HEK293T (cell line): ENCODE measurements at regions of chr1 and their contacts with region 1.

Region 1: DNA sequence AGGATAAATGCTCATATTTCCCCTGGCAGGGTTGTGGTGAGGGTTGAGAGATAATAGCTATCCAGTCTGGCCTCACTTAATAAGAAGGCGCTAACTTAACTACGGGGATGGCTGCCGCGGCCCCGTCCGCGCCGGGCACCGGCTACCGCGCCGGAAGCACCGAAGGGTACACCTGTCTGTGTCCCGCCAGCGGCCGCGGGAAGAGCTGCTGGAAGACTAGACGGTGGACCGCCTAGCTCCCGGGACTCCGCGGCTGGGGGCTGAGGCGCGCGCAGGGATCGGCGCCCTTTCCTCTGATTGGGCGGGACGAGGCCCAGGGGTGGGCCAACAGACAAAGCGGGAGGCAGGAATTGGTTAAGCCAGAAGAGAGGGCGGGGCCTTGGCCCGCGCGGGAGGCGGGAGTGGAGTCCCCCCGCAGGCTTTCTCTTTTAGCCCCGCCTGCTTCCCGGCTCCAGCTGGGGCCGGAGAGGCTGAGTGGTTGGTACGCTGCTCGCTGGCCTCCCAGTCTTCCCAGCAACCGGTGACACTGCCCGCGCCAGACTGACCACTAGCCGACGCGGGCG is at the start of gene ZNF672:
- DNase-seq: peak; percentile 88

Region 2: DNA sequence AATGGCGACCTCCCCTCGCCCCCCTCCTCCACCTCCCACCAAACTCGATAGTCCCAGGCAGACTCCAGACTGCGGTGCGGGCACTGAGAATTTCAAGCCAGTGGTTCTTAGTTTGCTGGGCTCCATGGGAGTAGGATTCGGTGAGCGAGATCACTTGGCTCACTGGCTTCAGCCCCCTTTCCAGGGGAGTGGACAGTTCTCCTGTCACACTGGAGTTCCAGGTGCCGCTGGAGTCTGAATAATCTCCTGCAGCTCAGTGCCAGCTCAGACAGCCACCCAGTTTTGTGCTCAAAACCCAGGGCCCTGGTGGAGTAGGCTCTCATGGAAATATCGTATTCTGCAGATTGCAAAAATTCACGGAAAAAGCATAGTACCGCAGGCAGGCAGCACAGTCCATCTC is 521.1 kb before region 1 on chr1:
- CTCF ChIA-PET with region 1: no interaction called
- POLR2A ChIA-PET with region 1: no interaction called
- DNase-seq: no peak

Region 3: GRCh38 chr1:248730507-248731335 is 107.2 kb before region 1 on chr1:
- CTCF ChIA-PET with region 1: no interaction called
- POLR2A ChIA-PET with region 1: no interaction called
- DNase-seq: no peak

Region 4: GRCh38 chr1:248779350-248779749 is 58.5 kb before region 1 on chr1:
- CTCF ChIA-PET with region 1: no interaction called
- POLR2A ChIA-PET with region 1: no interaction called
- DNase-seq: no peak

Region 5: GRCh38 chr1:248807067-248807737 is 30.7 kb before region 1 on chr1:
- CTCF ChIA-PET with region 1: no interaction called
- POLR2A ChIA-PET with region 1: no interaction called
- DNase-seq: peak; percentile 51

Region 6: GRCh38 chr1:248825909-248826760 is 11.7 kb before region 1 on chr1 and contains the start of gene SH3BP5L:
- CTCF ChIA-PET with region 1: no interaction called
- POLR2A ChIA-PET with region 1: interaction called, 13 read pairs
- DNase-seq: peak; percentile 87

Region 7: DNA sequence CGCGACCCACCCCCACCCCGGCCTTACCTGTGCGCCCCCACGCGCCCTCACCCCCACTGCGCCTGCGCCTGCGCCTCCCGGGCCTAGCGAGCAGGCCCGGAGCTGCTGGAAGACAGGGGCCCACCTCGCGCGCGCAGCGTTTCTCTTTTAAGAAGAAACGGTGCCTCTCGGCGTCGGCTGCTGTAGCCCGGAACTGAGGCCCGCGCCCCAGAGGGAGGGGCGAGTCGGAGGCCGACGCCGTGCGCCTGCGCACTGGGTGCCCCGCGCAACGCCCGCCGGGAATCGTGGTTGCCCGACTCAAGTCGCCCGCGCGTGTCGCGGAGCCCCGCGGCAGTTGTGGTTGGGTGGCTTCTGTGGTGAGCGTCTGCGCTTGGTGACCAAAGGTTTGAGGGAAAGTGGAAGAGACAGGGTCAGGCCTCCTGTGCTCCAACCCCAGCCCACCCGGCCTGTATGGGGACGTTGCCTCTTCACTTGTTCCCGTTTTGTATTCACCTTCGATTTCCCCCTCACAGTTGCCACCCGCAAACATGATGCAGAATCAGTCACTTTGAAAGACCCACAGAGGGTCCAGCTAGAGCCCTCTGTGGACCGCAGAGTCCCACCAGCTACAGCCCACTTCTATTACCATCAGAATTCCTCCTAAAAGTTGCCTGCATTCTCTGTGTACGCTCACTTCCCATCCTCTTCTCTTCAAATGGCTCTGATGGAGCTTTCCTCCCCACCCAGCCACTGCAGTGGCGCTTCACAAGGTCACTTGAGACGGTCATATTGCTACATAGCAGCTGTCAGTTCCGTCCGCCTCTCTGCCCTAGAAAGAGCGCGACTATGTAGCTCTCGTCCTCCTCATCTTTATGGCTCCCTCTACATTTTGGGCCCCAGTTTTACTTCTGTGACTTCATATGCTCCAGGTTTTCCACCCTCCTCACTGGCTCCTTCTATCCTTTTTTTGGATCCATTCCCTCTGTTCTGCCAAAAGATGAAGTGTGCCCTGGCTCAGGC is 21.3 kb after region 1 on chr1 and contains the start of gene ZNF692:
- CTCF ChIA-PET with region 1: interaction called, 3 read pairs
- POLR2A ChIA-PET with region 1: interaction called, 24 read pairs
- DNase-seq: peak; percentile 89